Endothelial cell of umbilical vein (primary cell): ENCODE measurements at regions of chr12 and their contacts with region 1.

Region 1: DNA sequence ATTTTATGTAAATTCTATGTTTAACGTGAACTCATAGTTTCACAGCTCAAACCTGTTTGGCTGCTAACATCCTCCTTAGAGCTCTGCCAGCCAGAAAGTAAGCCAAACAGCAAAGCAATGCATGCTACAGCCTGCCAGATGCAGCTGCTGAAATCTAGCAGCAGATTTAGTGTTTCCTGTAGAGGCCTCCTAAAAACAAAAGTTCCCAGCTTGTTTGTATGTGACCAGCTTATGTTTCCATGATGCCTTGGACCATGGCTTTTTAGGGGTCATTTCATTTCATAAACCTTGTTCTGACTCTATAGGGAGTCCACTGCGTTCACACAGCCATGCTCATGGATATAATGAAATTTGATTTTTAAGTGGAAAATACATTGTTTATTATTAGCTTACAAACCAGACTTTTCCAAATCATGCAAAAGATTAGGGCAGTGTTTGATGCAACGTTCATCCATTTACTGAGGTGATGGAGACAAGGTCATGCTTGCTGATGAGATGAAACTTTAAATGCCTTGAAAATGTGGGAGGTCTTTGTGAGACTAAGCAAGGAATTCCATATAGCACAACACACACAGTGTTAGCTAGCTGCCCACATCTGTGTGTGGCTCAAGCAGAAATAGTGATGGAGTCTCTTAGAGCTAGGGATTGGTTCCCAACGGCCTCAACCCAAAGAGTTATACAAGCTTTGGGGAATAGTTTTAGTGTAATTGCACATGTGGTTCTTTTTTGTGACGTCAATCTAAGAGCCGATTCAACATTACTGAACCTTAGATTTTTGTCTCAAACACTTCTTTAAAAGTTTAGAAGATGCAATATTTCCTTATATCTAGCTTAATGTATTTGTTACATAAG is 157.5 kb upstream of the LRIG3 start:
- DNase-seq: peak; percentile 93
- H3K4me3 ChIP-seq: no peak overlapping the region
- H3K27ac ChIP-seq: peak overlapping the region; percentile 9
- H3K4me1 ChIP-seq: peaks cover 52% of the 10 kb centered on the region
- H3K27me3 ChIP-seq: no peaks in the 10 kb centered on the region
- CTCF ChIP-seq: no peak
- POLR2A ChIP-seq: no peak

Region 2: GRCh38 chr12:58131986-58132755 is 945.6 kb before region 1 on chr12:
- CTCF ChIA-PET with region 1: no interaction called
- POLR2A ChIA-PET with region 1: no interaction called
- dilution Hi-C with region 1: no loop called
- intact Hi-C with region 1: no loop called
- DNase-seq: no peak
- H3K4me3 ChIP-seq: no peak overlapping the region
- H3K27ac ChIP-seq: no peak overlapping the region
- H3K4me1 ChIP-seq: no peaks in the 10 kb centered on the region
- H3K27me3 ChIP-seq: peaks cover 0 to 4% of the 10 kb centered on the region in 2 experiments
- CTCF ChIP-seq: no peak
- POLR2A ChIP-seq: no peak

Region 3: DNA sequence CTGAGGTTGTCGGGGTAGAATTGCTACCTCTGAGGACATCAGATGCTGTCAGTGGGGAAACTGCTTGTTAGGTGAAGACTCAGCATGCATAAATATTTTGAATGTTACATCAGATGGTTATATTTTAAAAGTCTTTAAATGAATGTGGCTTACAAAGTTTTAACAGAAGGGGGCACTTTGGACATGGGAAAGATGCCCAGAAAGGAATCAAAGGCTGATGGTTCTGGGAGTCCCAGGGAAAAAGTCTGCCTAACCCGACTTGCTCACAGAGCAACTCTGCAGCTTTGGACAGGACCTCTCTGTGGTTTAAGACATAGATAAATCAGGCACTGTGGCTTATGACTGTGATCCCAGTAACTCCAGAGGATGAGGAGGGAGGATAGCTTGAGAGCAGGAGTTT is 661.6 kb before region 1 on chr12:
- CTCF ChIA-PET with region 1: no interaction called
- POLR2A ChIA-PET with region 1: no interaction called
- dilution Hi-C with region 1: no loop called
- intact Hi-C with region 1: loop called (anchors 5 kb)
- DNase-seq: peak; percentile 41
- H3K4me3 ChIP-seq: no peak overlapping the region
- H3K27ac ChIP-seq: no peak overlapping the region
- H3K4me1 ChIP-seq: peaks cover 15% of the 10 kb centered on the region
- H3K27me3 ChIP-seq: no peaks in the 10 kb centered on the region
- CTCF ChIP-seq: no peak
- POLR2A ChIP-seq: no peak

Region 4: DNA sequence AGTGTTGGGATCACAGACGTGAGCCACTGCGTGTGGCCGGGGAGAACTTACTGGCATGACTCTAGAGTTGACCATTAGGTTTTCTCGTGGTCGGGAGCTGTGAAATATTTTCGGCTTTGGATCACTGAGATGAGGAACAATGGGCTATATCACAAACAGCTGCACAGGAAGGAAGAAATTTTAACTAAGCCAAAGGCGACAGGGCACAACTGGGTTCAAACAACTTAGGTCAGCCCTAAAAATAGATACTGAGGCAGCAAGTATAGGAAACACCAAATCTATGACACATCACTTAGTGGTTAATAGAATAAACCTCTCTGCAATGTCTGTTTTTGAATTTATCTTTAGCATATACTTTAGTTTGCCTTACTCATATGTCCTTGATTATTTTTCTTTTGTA is 320.4 kb before region 1 on chr12:
- CTCF ChIA-PET with region 1: no interaction called
- POLR2A ChIA-PET with region 1: no interaction called
- dilution Hi-C with region 1: no loop called
- intact Hi-C with region 1: loop called (anchors 5 kb)
- DNase-seq: peak; percentile 89
- H3K4me3 ChIP-seq: no peak overlapping the region
- H3K27ac ChIP-seq: peak overlapping the region; percentile 87
- H3K4me1 ChIP-seq: peaks cover 16% of the 10 kb centered on the region
- H3K27me3 ChIP-seq: no peaks in the 10 kb centered on the region
- CTCF ChIP-seq: no peak
- POLR2A ChIP-seq: no peak

Region 5: DNA sequence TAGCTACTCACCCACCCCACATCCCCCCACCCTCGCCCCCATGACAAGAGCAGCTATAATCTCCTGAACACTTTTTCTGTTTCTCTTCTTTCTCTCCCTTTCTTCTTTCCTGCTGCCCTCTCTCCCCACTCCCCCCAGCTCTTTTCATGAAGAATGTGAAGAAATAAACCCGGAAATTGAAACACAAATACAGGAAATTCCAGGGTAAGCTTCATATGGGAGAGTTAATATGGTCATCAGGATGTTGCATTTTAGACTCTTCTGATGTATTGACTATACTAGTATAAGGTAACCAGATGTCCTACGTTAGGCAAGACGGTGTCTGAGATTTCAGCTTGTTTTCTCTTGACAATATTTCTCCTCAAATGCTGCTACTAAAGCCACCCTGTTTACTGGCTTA is 115.9 kb before region 1 on chr12:
- CTCF ChIA-PET with region 1: interaction called, 3 read pairs
- POLR2A ChIA-PET with region 1: no interaction called
- dilution Hi-C with region 1: no loop called
- intact Hi-C with region 1: loop called (anchors 5 kb)
- DNase-seq: peak; percentile 72
- H3K4me3 ChIP-seq: peak overlapping the region in 1 of 3 experiments; percentile 15
- H3K27ac ChIP-seq: peak overlapping the region; percentile 97
- H3K4me1 ChIP-seq: peaks cover 18% of the 10 kb centered on the region
- H3K27me3 ChIP-seq: no peaks in the 10 kb centered on the region
- CTCF ChIP-seq: no peak
- POLR2A ChIP-seq: no peak

Region 6: GRCh38 chr12:59041241-59042121 is 36.3 kb before region 1 on chr12:
- CTCF ChIA-PET with region 1: interaction called, 4 read pairs
- POLR2A ChIA-PET with region 1: no interaction called
- dilution Hi-C with region 1: no loop called
- intact Hi-C with region 1: loop called (anchors 2 kb)
- DNase-seq: peak; percentile 89
- H3K4me3 ChIP-seq: no peak overlapping the region
- H3K27ac ChIP-seq: peak overlapping the region; percentile 81
- H3K4me1 ChIP-seq: peaks cover 32% of the 10 kb centered on the region
- H3K27me3 ChIP-seq: no peaks in the 10 kb centered on the region
- CTCF ChIP-seq: no peak
- POLR2A ChIP-seq: peak; percentile 27

Region 7: GRCh38 chr12:59067083-59067482 is 10.7 kb before region 1 on chr12:
- CTCF ChIA-PET with region 1: interaction called, 18 read pairs
- POLR2A ChIA-PET with region 1: no interaction called
- dilution Hi-C with region 1: no loop called
- intact Hi-C with region 1: no loop called
- DNase-seq: peak; percentile 76
- H3K4me3 ChIP-seq: no peak overlapping the region
- H3K27ac ChIP-seq: no peak overlapping the region
- H3K4me1 ChIP-seq: peaks cover 32% of the 10 kb centered on the region
- H3K27me3 ChIP-seq: no peaks in the 10 kb centered on the region
- CTCF ChIP-seq: no peak
- POLR2A ChIP-seq: no peak